GM10248 (cell line): ENCODE measurements at regions of chr5 and their contacts with region 1.

Region 1: GRCh38 chr5:54492178-54492577 is 25.4 kb upstream of the SNX18 start:
- DNase-seq: no peak
- CTCF ChIP-seq: no peak

Region 2: GRCh38 chr5:54243473-54244080 is 248.6 kb before region 1 on chr5:
- CTCF ChIA-PET with region 1: interaction called, 70 read pairs
- POLR2A ChIA-PET with region 1: no interaction called
- DNase-seq: peak; percentile 27
- CTCF ChIP-seq: peak; percentile 71

Region 3: GRCh38 chr5:54379590-54379989 is 112.6 kb before region 1 on chr5:
- CTCF ChIA-PET with region 1: interaction called, 12 read pairs
- POLR2A ChIA-PET with region 1: no interaction called
- DNase-seq: peak; percentile 20
- CTCF ChIP-seq: no peak

Region 4: DNA sequence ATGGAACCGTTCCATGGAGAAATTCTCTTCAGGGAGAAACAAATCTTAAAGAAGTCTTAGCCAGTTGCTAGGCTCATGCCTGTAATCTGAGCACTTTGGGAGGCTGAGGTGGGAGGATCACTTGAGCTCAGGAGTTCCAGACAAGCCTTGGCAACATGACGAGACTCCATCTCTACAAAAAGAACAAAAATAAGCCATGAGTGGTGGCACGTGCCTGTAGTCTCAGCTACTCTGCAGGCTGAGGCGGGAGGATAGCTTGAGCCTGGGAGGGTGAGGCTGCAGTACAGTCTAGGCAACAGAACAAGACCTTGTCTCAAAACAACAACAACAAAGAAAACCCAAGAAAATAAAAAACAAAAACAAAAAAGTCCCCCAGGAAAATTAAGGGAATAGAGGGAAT is 28.5 kb before region 1 on chr5:
- CTCF ChIA-PET with region 1: interaction called, 10 read pairs
- POLR2A ChIA-PET with region 1: no interaction called
- DNase-seq: no peak
- CTCF ChIP-seq: no peak

Region 5: DNA sequence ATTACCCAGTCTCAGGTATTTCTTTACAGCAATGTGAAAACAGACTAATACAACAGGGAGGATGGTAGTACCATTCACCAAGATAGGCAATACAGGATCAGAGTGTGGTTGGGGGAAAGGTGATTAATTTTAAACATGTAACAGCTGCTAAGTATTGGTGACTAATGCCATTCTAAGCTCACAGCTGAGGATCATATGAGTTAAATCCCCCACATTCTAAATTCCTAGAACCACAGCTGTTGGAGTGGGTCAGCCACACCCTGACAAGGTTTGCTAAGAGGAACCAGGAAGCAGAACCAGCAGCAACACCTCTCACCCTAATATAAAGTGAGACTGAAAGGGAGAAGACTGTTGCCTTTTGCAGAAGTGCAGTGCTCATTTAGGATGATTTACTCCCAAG is 11.9 kb before region 1 on chr5:
- CTCF ChIA-PET with region 1: interaction called, 22 read pairs
- POLR2A ChIA-PET with region 1: no interaction called
- DNase-seq: no peak
- CTCF ChIP-seq: no peak

Region 6: GRCh38 chr5:54553659-54554207 is 61.6 kb after region 1 on chr5:
- CTCF ChIA-PET with region 1: no interaction called
- POLR2A ChIA-PET with region 1: no interaction called
- DNase-seq: no peak
- CTCF ChIP-seq: no peak

Region 7: GRCh38 chr5:54637654-54638053 is 145.5 kb after region 1 on chr5:
- CTCF ChIA-PET with region 1: no interaction called
- POLR2A ChIA-PET with region 1: no interaction called
- DNase-seq: no peak
- CTCF ChIP-seq: no peak